T-cell (primary cell): ENCODE measurements at regions of chr1 and their contacts with region 1.

Region 1: GRCh38 chr1:92804721-92805169 is 19.8 kb upstream of the EVI5 start:
- DNase-seq: peak in 7 of 35 experiments; percentile 0 to 32 (median 3)
- ATAC-seq: peak in 1 of 4 experiments; percentile 72
- H3K4me3 ChIP-seq: no peak overlapping the region
- H3K4me3 Mint-ChIP-seq: no peak overlapping the region
- H3K27ac ChIP-seq: no peak overlapping the region
- H3K27ac Mint-ChIP-seq: no peak overlapping the region
- H3K4me1 ChIP-seq: no peaks in the 10 kb centered on the region
- H3K4me1 Mint-ChIP-seq: peaks cover 0 to 5% (median 2%) of the 10 kb centered on the region in 3 donors
- H3K27me3 ChIP-seq: peaks cover 0 to 3% of the 10 kb centered on the region in 2 experiments
- H3K27me3 Mint-ChIP-seq: peaks cover 3 to 4% of the 10 kb centered on the region in 2 donors

Region 2: GRCh38 chr1:91623020-91623419 is 1181.7 kb before region 1 on chr1:
- CTCF ChIA-PET with region 1: no interaction called
- POLR2A ChIA-PET with region 1: interaction called in 1 of 2 experiments, 14 read pairs
- DNase-seq: no peak
- ATAC-seq: no peak
- H3K4me3 ChIP-seq: no peak overlapping the region
- H3K4me3 Mint-ChIP-seq: no peak overlapping the region
- H3K27ac ChIP-seq: no peak overlapping the region
- H3K27ac Mint-ChIP-seq: no peak overlapping the region
- H3K4me1 ChIP-seq: no peaks in the 10 kb centered on the region
- H3K4me1 Mint-ChIP-seq: no peaks in the 10 kb centered on the region
- H3K27me3 ChIP-seq: no peaks in the 10 kb centered on the region
- H3K27me3 Mint-ChIP-seq: peaks cover 0 to 8% of the 10 kb centered on the region in 2 donors

Region 3: DNA sequence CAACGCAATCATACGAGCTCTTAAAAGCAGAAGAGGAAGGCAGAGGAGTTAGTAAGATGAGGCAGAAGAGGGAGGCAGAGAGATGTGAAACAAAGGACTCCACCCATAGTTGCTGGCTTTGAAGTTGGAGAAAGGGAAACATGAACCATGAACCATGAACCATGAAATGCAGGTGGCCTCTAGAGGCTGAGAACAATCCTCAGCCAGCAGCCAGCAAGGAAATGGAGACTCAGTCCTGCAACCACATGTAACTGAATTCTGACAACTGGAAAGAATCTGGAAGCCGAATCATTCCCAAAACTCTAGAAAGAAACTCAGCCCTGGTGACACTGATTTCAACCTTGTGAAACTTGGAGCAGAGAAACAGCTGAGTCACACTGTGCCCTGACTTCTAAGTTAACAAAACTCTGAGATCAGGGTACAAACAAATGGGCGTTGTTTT is 146.4 kb after region 1 on chr1:
- CTCF ChIA-PET with region 1: no interaction called
- POLR2A ChIA-PET with region 1: no interaction called
- DNase-seq: peak in 16 of 35 experiments; percentile 4 to 62 (median 17)
- ATAC-seq: peak; percentile 82 to 95 (median 90)
- H3K4me3 ChIP-seq: no peak overlapping the region
- H3K4me3 Mint-ChIP-seq: no peak overlapping the region
- H3K27ac ChIP-seq: peak overlapping the region; percentile 7
- H3K27ac Mint-ChIP-seq: no peak overlapping the region
- H3K4me1 ChIP-seq: peaks cover 28 to 36% of the 10 kb centered on the region in 2 experiments
- H3K4me1 Mint-ChIP-seq: peaks cover 33 to 54% (median 52%) of the 10 kb centered on the region in 3 donors
- H3K27me3 ChIP-seq: no peaks in the 10 kb centered on the region
- H3K27me3 Mint-ChIP-seq: no peaks in the 10 kb centered on the region